ENCODE measurements at regions of chr13 and their contacts with region 1.

Region 1: GRCh38 chr13:20703780-20704445 is 414 bp downstream of the IL17D start:
- DNase-seq: peak; percentile 90
- H3K4me3 ChIP-seq: peak overlapping the region; percentile 49
- H3K27ac ChIP-seq: no peak overlapping the region
- H3K4me1 ChIP-seq: peaks cover 13% of the 10 kb centered on the region
- CTCF ChIP-seq: no peak; the same call in 1 of the 2 replicates

Region 2: GRCh38 chr13:20495082-20496023 is 208.6 kb before region 1 on chr13:
- CTCF ChIA-PET with region 1: no interaction called
- POLR2A ChIA-PET with region 1: no interaction called
- intact Hi-C with region 1: loop called (anchors 5 kb)
- DNase-seq: peak; percentile 69
- H3K4me3 ChIP-seq: no peak overlapping the region
- H3K27ac ChIP-seq: no peak overlapping the region
- H3K4me1 ChIP-seq: no peaks in the 10 kb centered on the region
- CTCF ChIP-seq: peak; percentile 98

Region 3: GRCh38 chr13:20566898-20567874 is 136.7 kb before region 1 on chr13 and contains the start of gene IFT88:
- CTCF ChIA-PET with region 1: no interaction called
- POLR2A ChIA-PET with region 1: no interaction called
- intact Hi-C with region 1: loop called (anchors 2 kb)
- DNase-seq: peak; percentile 86
- H3K4me3 ChIP-seq: peak within 1 kb of the TSS; percentile 80
- H3K27ac ChIP-seq: peak within 1 kb of the TSS; percentile 53
- H3K4me1 ChIP-seq: peaks cover 4% of the 10 kb centered on the region
- CTCF ChIP-seq: no peak
- total RNA-seq, gene IFT88: 6.7 and 6.9 TPM in 2 replicates

Region 4: DNA sequence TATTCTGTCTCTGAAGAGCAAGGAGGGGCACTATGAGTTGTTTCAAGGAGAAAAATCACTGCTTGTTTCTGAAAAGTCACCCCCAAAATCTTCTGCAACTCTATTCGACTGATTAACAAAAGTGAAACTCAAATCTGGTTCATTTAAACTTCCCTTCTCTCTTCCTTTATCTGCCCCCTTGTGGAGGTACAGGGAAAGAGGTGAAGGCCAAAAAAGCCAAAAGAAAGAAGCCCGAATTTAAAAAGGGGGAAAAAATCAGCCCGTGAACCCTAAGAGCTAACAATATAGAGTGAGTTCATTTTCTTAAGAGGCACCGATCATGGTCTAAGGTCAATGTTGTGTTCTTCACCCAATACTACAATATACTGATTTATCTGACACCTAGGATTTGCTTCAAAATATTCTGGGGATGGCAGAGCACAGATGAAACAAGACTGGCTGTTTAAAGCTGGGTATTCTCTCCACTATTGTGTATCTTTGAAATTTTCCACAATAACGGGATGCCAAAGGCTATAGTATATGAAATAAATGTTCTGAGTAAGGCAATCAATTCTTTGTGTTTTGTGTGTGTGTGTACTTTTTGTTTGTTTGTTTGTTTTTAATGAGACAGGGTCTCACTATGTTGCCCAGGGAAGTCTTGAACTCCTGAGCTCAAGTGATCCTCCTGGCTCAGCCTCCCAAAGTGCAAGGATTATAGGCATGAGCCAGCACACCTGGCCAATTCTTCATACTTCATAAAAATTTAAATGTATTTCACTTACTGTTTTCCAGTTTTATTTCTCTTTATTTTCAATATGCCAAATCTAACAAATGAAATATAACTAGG is 124.8 kb after region 1 on chr13:
- CTCF ChIA-PET with region 1: no interaction called
- POLR2A ChIA-PET with region 1: no interaction called
- intact Hi-C with region 1: loop called (anchors 5 kb)
- DNase-seq: peak; percentile 68
- H3K4me3 ChIP-seq: no peak overlapping the region
- H3K27ac ChIP-seq: no peak overlapping the region
- H3K4me1 ChIP-seq: peaks cover 28% of the 10 kb centered on the region
- CTCF ChIP-seq: peak; percentile 87

Region 5: DNA sequence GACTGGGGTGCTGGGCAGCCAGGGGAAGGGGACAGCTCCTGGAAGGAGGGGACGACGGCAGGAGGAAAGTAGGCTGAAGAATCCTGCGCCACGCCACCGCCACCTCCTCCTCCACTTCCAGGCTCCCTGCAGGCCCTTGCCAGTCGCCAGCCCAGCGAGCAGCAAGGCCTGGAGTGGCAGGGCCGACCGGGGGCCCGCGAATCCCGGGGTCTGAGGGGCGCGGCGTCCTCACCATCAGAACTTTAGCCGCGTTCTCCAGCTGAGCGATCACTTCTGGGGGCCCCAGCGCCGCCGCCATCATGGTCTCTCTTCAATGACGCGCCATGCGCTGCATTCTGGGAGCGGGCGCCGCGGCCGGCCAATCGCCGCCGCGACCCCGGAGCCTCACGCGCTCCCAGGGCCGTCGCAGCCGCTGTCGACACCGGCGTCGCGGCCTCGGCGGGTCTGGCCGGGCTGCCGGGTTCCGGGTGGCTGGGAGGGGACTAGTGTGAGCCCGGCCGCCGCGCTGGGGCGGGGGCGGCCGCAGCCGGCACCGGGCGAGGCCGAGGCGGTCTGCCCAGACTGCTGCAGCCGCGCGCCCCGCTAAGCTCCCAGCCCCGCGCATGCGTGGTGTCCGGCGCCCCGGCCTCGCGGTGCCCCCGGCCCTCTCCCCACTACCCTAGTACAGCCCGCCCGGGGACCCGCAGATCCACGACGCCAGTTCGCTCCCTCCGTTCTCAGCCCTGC is 198.7 kb after region 1 on chr13 and contains the start of gene XPO4:
- CTCF ChIA-PET with region 1: no interaction called
- POLR2A ChIA-PET with region 1: no interaction called
- intact Hi-C with region 1: loop called (anchors 10 kb)
- DNase-seq: peak; percentile 86
- H3K4me3 ChIP-seq: peak within 1 kb of the TSS; percentile 99
- H3K27ac ChIP-seq: peak within 1 kb of the TSS; percentile 64
- H3K4me1 ChIP-seq: peaks cover 20% of the 10 kb centered on the region
- CTCF ChIP-seq: no peak
- total RNA-seq, gene XPO4: 20.6 and 22.9 TPM in 2 replicates

Region 6: DNA sequence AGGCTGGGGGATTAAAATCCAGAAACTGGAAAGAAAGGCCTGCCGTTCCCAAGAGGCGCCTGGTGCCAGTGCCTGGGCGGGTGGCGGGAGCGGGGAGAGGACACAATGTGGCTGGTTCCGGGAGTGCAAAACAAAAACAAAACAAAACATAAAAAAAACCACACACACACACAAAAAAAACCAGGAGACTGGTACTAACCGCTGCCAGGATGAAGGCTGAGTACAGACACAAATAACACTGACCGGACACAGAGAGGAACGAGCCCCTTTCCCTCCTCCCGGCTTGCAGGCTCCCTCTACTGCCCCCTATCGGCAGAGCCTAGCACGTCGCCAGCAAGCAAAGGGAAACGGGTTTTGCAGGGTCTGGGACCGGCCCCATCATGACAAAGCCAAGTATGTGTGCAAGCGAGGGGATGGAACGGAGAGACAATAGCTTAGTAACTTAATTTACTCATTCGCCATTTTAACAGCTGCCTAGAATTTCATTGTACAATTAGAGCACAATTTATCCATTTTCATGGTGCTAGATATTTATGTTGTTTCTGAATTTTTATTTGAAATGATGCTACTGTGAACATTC is 773.1 kb after region 1 on chr13:
- CTCF ChIA-PET with region 1: no interaction called
- POLR2A ChIA-PET with region 1: no interaction called
- intact Hi-C with region 1: loop called (anchors 5 kb)
- DNase-seq: peak; percentile 81
- H3K4me3 ChIP-seq: peak overlapping the region; percentile 55
- H3K27ac ChIP-seq: no peak overlapping the region
- H3K4me1 ChIP-seq: no peaks in the 10 kb centered on the region
- CTCF ChIP-seq: peak; percentile 95

Measured in OCI-LY7 (cell line).